ENCODE measurements at regions of chr12 and their contacts with region 1.

Region 1: DNA sequence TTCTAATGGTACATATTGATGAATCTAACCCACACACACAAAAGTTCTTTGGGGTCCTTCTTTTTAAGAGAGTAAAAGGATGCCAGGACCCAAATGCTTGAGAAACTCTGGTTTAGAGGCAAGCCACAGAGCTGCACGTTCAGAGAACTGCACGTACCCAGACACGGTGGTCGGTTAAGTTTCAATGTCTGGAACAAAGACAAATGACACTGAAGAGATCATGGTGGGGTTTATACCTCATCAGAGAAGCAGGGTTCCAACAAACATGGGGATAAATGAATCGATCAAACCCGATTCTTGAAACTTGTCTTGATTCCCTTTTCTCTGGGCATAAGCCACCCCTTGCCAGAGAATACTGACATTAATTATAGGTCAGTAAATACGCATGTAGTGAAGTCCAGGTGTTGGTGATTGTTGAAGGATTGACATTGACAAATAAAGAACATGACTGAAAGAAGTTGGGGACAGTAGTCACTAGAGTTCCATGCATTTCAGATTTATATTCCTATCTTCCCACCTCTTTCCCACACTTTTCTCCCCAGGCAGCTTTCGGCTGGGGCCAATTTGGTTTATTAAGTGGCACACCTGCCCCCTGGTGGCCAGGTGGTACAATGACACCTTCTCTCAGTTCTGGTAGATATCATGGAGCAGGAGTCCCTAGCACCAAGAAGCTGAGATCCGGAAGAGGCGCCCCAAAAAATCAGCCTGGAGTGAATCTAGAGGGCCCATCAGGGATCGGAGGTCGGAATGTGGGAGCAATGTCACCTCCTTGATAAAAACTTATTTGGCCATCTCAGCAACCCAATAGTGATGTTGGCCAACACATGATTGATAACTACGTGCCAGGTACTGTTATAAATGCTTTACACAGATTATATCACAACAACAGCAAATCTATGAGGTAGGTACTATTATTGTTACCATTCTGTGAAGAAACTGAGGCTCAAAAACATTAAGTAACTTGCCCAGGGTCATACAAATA is 17.8 kb upstream of the HDAC7 start:
- DNase-seq: peak in 1 of 2 donors; percentile 87
- H3K4me3 ChIP-seq: no peak overlapping the region
- H3K27ac ChIP-seq: peak overlapping the region in 1 of 2 donors; percentile 0
- H3K4me1 ChIP-seq: no peaks in the 10 kb centered on the region
- H3K27me3 ChIP-seq: no peaks in the 10 kb centered on the region
- CTCF ChIP-seq: peak; percentile 84 to 89 (median 88)

Region 2: GRCh38 chr12:47651368-47652254 is 185.9 kb before region 1 on chr12:
- intact Hi-C with region 1: loop called (anchors 1 kb)
- DNase-seq: peak in 1 of 2 donors; percentile 72
- H3K4me3 ChIP-seq: peak overlapping the region in 1 of 2 donors; percentile 48
- H3K27ac ChIP-seq: peak overlapping the region; percentile 6 to 29
- H3K4me1 ChIP-seq: peaks cover 0 to 2% of the 10 kb centered on the region in 2 donors
- H3K27me3 ChIP-seq: no peaks in the 10 kb centered on the region
- CTCF ChIP-seq: peak; percentile 66 to 86 (median 74)

Region 3: GRCh38 chr12:47705566-47706425 is 131.7 kb before region 1 on chr12 and contains the start of gene RPAP3:
- intact Hi-C with region 1: loop called (anchors 2 kb)
- DNase-seq: peak; percentile 85 to 98
- H3K4me3 ChIP-seq: peak within 1 kb of the TSS; percentile 94 to 95
- H3K27ac ChIP-seq: peak within 1 kb of the TSS; percentile 78 to 94
- H3K4me1 ChIP-seq: peaks cover 0 to 6% of the 10 kb centered on the region in 2 donors
- H3K27me3 ChIP-seq: no peaks in the 10 kb centered on the region
- CTCF ChIP-seq: peak; percentile 50 to 68 (median 66)
- total RNA-seq, gene RPAP3: 8.1 TPM

Region 4: GRCh38 chr12:47715393-47715876 is 122.0 kb before region 1 on chr12:
- intact Hi-C with region 1: loop called (anchors 1 kb)
- DNase-seq: peak in 1 of 2 donors; percentile 89
- H3K4me3 ChIP-seq: peak overlapping the region in 1 of 2 donors; percentile 42
- H3K27ac ChIP-seq: peak overlapping the region; percentile 88 to 94
- H3K4me1 ChIP-seq: peaks cover 19 to 26% of the 10 kb centered on the region in 2 donors
- H3K27me3 ChIP-seq: no peaks in the 10 kb centered on the region
- CTCF ChIP-seq: peak; percentile 69 to 90 (median 80)

Region 5: GRCh38 chr12:47742253-47742825 is 95.1 kb before region 1 on chr12:
- intact Hi-C with region 1: no loop called
- DNase-seq: peak in 1 of 2 donors; percentile 83
- H3K4me3 ChIP-seq: no peak overlapping the region
- H3K27ac ChIP-seq: no peak overlapping the region
- H3K4me1 ChIP-seq: peaks cover 0 to 20% of the 10 kb centered on the region in 2 donors
- H3K27me3 ChIP-seq: no peaks in the 10 kb centered on the region
- CTCF ChIP-seq: peak; percentile 92 to 96 (median 93)

Region 6: DNA sequence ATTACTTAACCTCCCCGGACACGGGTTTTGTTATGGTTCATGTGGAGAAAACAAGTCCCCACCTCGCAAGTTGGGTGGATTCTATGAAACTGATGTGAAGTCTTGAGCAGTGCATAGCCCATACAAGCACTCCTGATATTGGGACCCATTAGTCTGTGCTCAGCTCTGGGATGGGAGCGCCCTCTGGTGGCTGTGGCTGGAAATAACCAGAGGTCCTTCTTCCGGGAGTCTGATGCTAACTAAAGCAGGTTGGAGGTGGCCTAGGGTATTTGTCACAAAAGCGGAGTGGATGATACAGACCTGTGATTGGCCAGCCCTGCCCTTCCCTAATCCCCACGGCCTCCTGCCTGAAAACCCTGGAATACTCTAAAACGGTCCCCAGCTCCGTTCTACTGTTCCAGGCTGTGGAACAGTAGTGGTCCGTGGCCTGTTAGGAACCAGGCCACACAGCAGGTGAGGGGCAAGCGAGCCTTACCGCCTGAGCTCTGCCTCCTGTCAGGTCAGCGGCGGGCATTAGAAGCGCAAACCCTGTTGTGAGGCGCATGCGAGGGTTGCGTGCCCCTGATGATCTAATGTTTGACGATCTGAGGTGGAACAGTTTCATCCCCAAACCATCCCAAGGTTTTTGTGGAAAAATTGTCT is 58.1 kb before region 1 on chr12:
- intact Hi-C with region 1: loop called (anchors 1 kb)
- DNase-seq: peak; percentile 63 to 96
- H3K4me3 ChIP-seq: no peak overlapping the region
- H3K27ac ChIP-seq: peak overlapping the region; percentile 53 to 88
- H3K4me1 ChIP-seq: peaks cover 37 to 51% of the 10 kb centered on the region in 2 donors
- H3K27me3 ChIP-seq: no peaks in the 10 kb centered on the region
- CTCF ChIP-seq: peak; percentile 87 to 95 (median 92)

Region 7: GRCh38 chr12:47801170-47801903 is 36.1 kb before region 1 on chr12:
- intact Hi-C with region 1: loop called (anchors 2 kb)
- DNase-seq: no peak
- H3K4me3 ChIP-seq: peak overlapping the region in 1 of 2 donors; percentile 33
- H3K27ac ChIP-seq: peak overlapping the region; percentile 79 to 85
- H3K4me1 ChIP-seq: peaks cover 48 to 77% of the 10 kb centered on the region in 2 donors
- H3K27me3 ChIP-seq: no peaks in the 10 kb centered on the region
- CTCF ChIP-seq: peak in 2 of 3 experiments; percentile 32 to 34

Region 8: GRCh38 chr12:47819896-47820630 is 17.4 kb before region 1 on chr12 and contains the start of gene HDAC7:
- intact Hi-C with region 1: loop called (anchors 1 kb)
- DNase-seq: peak in 1 of 2 donors; percentile 91
- H3K4me3 ChIP-seq: peak within 1 kb of the TSS; percentile 88 to 89
- H3K27ac ChIP-seq: peak within 1 kb of the TSS; percentile 97
- H3K4me1 ChIP-seq: peaks cover 34 to 66% of the 10 kb centered on the region in 2 donors
- H3K27me3 ChIP-seq: no peaks in the 10 kb centered on the region
- CTCF ChIP-seq: peak in 1 of 3 experiments; percentile 22
- total RNA-seq, gene HDAC7: 202 TPM

Measured in ascending aorta (tissue), 2 donors.